ENCODE measurements at regions of chr4 and their contacts with region 1.

Region 1: DNA sequence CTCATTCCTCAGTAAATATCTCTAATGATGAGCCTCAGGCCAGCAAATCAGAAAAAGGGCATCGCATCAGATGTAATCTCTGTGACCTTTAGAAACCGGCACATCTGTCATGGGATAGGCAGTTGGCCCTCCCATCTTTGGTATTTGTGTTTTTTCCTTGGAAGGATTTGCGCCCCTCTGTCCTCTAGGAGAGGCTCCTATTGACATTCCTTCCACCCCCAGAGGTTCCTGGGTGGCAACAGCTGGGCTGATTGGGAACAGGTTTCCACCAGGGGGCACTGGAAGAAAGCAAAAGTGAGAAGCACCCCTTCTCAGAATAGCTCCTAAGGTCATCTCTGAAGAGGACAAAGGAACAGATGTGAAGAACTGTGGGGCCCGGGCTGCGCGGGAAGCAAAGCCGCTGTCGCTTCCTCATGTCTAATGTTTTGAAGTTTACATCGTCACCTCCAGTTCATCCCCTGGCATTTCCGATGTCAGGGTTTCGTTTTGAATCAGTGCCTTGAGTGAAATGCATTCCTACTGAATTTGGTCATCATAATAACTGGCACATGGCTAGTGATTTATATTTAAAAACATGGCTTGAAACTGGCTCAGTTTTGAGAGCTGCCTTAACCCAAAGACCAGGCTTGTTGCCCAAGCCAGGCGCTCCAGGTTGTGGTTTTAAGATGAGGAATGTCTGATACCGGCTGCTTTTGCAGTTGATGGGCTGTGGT is 6.2 kb downstream of the TXK start:
- DNase-seq: peak; percentile 81
- ATAC-seq: peak; percentile 92
- H3K4me3 ChIP-seq: no peak overlapping the region
- H3K27ac ChIP-seq: no peak overlapping the region
- H3K4me1 ChIP-seq: peaks cover 15% of the 10 kb centered on the region
- H3K27me3 ChIP-seq: no peaks in the 10 kb centered on the region
- CTCF ChIP-seq: peak; percentile 64 to 71 (median 66)
- EP300 ChIP-seq: no peak
- POLR2A ChIP-seq: 0 out of 2 replicates have a peak, but pooled peaks have one; percentile 32
- RAD21 ChIP-seq: peak; percentile 85

Region 2: GRCh38 chr4:48290146-48290772 is 162.4 kb after region 1 on chr4:
- CTCF ChIA-PET with region 1: interaction called, 13 read pairs
- POLR2A ChIA-PET with region 1: no interaction called
- RAD21 ChIA-PET with region 1: interaction called, 6 read pairs
- SMC1A ChIA-PET with region 1: interaction called, 11 read pairs
- in situ Hi-C with region 1: no loop called
- intact Hi-C with region 1: loop called (anchors 5 kb)
- DNase-seq: no peak
- ATAC-seq: peak; percentile 82
- H3K4me3 ChIP-seq: no peak overlapping the region
- H3K27ac ChIP-seq: no peak overlapping the region
- H3K4me1 ChIP-seq: no peaks in the 10 kb centered on the region
- H3K27me3 ChIP-seq: no peaks in the 10 kb centered on the region
- CTCF ChIP-seq: peak; percentile 64 to 76 (median 66)
- EP300 ChIP-seq: no peak
- POLR2A ChIP-seq: no peak
- RAD21 ChIP-seq: peak; percentile 65

Region 3: GRCh38 chr4:48681856-48682255 is 554.0 kb after region 1 on chr4:
- CTCF ChIA-PET with region 1: no interaction called
- POLR2A ChIA-PET with region 1: no interaction called
- RAD21 ChIA-PET with region 1: no interaction called
- SMC1A ChIA-PET with region 1: no interaction called
- in situ Hi-C with region 1: no loop called
- intact Hi-C with region 1: no loop called
- DNase-seq: peak; percentile 35
- ATAC-seq: peak; percentile 94
- H3K4me3 ChIP-seq: no peak overlapping the region
- H3K27ac ChIP-seq: no peak overlapping the region
- H3K4me1 ChIP-seq: peaks cover 13% of the 10 kb centered on the region
- H3K27me3 ChIP-seq: no peaks in the 10 kb centered on the region
- CTCF ChIP-seq: peak; percentile 30 to 69 (median 38); a peak in 4 of 6 replicates
- EP300 ChIP-seq: no peak
- POLR2A ChIP-seq: no peak
- RAD21 ChIP-seq: peak; percentile 71

Region 4: DNA sequence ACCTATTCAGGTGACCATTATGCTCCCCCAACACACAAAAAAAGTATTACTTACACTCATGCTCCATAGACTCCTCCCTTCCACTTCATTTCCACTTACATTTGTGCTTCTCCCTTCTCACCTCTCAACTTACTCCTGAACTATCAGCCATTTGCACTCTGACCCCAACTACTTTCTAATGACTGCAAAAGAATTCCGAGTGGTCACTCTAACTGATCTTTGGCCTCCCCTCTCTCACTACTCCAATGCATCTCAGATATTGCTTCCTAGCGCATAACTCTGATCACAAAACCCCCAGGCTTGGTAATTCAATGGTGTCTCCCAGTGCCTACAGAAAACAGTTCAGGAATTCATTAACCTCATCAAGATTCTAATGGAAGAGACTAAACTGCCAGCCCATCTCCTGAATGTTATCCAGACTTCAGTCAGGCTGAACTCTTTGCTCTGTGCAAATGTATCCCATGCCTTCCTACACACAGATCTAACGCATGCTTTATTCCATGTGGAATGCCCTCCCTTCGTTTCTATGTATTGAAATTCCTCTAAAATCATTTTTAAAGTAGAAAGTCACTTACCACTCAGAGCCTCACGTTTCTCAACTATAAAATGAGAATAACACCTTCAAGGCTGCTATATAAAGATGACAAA is 591.1 kb after region 1 on chr4:
- CTCF ChIA-PET with region 1: no interaction called
- POLR2A ChIA-PET with region 1: no interaction called
- RAD21 ChIA-PET with region 1: no interaction called
- SMC1A ChIA-PET with region 1: no interaction called
- in situ Hi-C with region 1: no loop called
- intact Hi-C with region 1: no loop called
- DNase-seq: no peak
- ATAC-seq: no peak
- H3K4me3 ChIP-seq: no peak overlapping the region
- H3K27ac ChIP-seq: no peak overlapping the region
- H3K4me1 ChIP-seq: no peaks in the 10 kb centered on the region
- H3K27me3 ChIP-seq: no peaks in the 10 kb centered on the region
- CTCF ChIP-seq: no peak
- EP300 ChIP-seq: no peak
- POLR2A ChIP-seq: no peak
- RAD21 ChIP-seq: no peak

Measured in GM12878 (cell line).